Sigmoid colon (tissue), 7 donors: ENCODE measurements at regions of chr1 and their contacts with region 1.

Region 1: DNA sequence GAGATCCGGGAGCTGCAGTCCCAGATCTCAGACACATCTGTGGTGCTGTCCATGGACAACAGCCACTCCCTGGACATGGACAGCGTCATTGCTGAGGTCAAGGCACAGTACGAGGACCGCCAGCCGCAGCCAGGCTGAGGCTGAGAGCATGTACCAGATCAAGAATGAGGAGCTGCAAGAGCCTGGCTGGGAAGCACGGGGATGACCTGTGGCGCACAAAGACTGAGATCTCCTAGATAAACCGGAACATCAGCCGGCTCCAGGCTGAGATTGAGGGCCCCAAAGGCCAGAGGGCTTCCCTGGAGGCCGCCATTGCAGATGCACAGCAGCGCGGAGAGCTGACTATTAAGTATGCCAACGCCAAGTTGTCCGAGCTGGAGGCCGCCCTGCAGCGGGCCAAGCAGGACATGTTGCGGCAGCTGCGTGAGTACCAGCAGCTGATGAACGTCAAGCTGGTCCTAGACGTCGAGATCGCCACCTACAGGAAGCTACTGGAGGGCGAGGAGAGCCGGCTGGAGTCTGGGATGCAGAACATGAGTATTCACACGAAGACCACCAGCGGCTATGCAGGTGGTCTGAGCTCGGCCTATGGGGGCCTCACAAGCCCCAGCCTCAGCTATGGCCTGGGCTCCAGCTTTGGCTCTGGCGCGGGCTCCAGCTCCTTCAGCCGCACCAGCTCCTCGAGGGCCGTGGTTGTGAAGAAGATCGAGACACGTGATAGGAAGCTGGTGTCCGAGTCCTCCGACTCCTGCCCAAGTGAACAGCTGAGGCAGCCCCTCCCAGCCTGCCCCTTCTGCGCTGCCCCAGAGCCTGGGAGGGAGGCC is 25.5 kb downstream of the ETV3L start:
- DNase-seq: peak; percentile 84
- H3K4me3 ChIP-seq: peak overlapping the region in 3 of 4 donors; percentile 11 to 20 (median 20)
- H3K27ac ChIP-seq: no peak overlapping the region
- H3K4me1 ChIP-seq: peaks cover 0 to 9% (median 7%) of the 10 kb centered on the region in 4 donors
- H3K27me3 ChIP-seq: no peaks in the 10 kb centered on the region
- CTCF ChIP-seq: peak in 3 of 4 experiments; percentile 53 to 76 (median 67)
- EP300 ChIP-seq: no peak
- POLR2A ChIP-seq: no peak

Region 2: DNA sequence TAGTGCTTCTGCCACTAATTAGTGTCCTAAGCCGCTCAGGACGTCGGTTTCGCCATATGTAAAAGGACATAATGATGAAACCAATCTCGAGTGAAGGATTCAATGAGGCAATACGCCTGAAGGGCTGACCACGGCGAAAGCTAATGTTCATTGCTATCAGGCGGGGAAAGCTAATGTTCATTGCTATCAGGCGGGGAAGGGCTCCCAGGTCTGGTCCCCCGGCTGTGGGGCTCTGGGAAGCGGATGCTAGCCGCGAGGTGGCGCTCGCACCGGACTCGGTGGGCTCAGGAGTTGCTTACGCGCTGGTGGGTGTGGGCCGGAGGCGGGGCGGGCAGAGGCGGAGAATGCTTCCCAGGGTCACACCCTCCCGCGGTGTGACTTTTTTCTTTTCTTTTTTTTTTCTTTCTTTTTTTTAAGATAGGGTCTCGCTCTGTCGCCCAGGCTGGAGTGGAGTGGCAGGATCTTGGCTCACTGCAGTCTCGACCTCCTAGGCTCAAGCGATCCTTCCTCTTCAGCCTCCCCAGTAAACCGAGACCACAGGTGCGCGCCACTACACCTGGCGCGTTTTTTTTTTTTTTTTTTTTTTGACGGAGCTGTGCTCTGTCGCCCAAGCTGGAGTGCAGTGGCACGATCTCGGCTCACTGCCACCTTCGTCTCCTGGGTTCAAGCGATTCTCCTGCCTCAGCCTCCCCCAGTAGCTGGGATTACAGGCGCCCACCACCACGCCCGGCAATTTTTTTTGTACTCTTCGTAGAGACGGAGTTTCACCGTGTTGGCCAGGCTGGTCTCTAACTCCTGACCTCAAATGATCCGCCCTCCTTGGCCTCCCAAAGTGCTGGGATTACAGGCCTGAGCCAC is 181.7 kb before region 1 on chr1:
- intact Hi-C with region 1: loop called (anchors 5 kb)
- DNase-seq: peak; percentile 95
- H3K4me3 ChIP-seq: peak overlapping the region; percentile 7 to 45 (median 44)
- H3K27ac ChIP-seq: peak overlapping the region; percentile 72 to 83 (median 77)
- H3K4me1 ChIP-seq: peaks cover 0 to 25% (median 15%) of the 10 kb centered on the region in 4 donors
- H3K27me3 ChIP-seq: peaks cover 18 to 31% (median 22%) of the 10 kb centered on the region in 3 donors
- CTCF ChIP-seq: peak; percentile 14 to 77 (median 60)
- EP300 ChIP-seq: no peak
- POLR2A ChIP-seq: no peak

Region 3: DNA sequence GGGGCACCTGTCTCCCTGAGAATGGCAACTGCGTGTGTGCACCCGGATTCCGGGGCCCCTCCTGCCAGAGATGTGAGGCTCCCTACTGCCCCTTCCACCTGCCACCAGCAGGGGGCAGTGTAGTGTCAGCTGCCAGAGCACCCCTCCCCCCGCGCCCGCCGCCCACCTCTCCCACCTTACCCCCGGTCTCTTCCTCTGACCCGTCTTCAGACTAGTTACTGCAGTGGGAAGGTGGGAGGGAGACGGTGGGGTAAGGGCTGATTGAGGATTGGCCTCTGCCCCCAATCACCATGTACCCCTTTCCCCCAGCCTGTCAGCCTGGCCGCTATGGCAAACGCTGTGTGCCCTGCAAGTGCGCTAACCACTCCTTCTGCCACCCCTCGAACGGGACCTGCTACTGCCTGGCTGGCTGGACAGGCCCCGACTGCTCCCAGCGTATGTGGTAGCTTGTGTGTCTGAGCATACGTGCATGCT is 163.8 kb before region 1 on chr1:
- intact Hi-C with region 1: loop called (anchors 5 kb)
- DNase-seq: no peak
- H3K4me3 ChIP-seq: no peak overlapping the region
- H3K27ac ChIP-seq: no peak overlapping the region
- H3K4me1 ChIP-seq: no peaks in the 10 kb centered on the region
- H3K27me3 ChIP-seq: peaks cover 0 to 15% (median 0%) of the 10 kb centered on the region in 3 donors
- CTCF ChIP-seq: peak in 3 of 4 experiments; percentile 43 to 87 (median 56)
- EP300 ChIP-seq: no peak
- POLR2A ChIP-seq: no peak

Region 4: GRCh38 chr1:156961709-156962108 is 112.4 kb before region 1 on chr1:
- intact Hi-C with region 1: loop called (anchors 5 kb)
- DNase-seq: no peak
- H3K4me3 ChIP-seq: no peak overlapping the region
- H3K27ac ChIP-seq: no peak overlapping the region
- H3K4me1 ChIP-seq: no peaks in the 10 kb centered on the region
- H3K27me3 ChIP-seq: no peaks in the 10 kb centered on the region
- CTCF ChIP-seq: no peak
- EP300 ChIP-seq: no peak
- POLR2A ChIP-seq: no peak

Region 5: GRCh38 chr1:157000686-157001085 is 73.5 kb before region 1 on chr1:
- intact Hi-C with region 1: loop called (anchors 10 kb)
- DNase-seq: no peak
- H3K4me3 ChIP-seq: no peak overlapping the region
- H3K27ac ChIP-seq: no peak overlapping the region
- H3K4me1 ChIP-seq: peaks cover 0 to 47% (median 35%) of the 10 kb centered on the region in 4 donors
- H3K27me3 ChIP-seq: no peaks in the 10 kb centered on the region
- CTCF ChIP-seq: no peak
- EP300 ChIP-seq: no peak
- POLR2A ChIP-seq: no peak